Activated CD4-positive, alpha-beta memory T cell treated with anti-CD3 and anti-CD28 coated beads for 36 hours (primary cell): ENCODE measurements at regions of chr3 and their contacts with region 1.

Region 1: GRCh38 chr3:197613199-197613598 is 57.4 kb upstream of the BDH1 start:
- DNase-seq: peak; percentile 73
- H3K4me3 Mint-ChIP-seq: peak overlapping the region; percentile 5
- H3K27ac Mint-ChIP-seq: peak overlapping the region; percentile 80
- H3K4me1 Mint-ChIP-seq: peaks cover 21% of the 10 kb centered on the region
- H3K27me3 Mint-ChIP-seq: no peaks in the 10 kb centered on the region

Region 2: DNA sequence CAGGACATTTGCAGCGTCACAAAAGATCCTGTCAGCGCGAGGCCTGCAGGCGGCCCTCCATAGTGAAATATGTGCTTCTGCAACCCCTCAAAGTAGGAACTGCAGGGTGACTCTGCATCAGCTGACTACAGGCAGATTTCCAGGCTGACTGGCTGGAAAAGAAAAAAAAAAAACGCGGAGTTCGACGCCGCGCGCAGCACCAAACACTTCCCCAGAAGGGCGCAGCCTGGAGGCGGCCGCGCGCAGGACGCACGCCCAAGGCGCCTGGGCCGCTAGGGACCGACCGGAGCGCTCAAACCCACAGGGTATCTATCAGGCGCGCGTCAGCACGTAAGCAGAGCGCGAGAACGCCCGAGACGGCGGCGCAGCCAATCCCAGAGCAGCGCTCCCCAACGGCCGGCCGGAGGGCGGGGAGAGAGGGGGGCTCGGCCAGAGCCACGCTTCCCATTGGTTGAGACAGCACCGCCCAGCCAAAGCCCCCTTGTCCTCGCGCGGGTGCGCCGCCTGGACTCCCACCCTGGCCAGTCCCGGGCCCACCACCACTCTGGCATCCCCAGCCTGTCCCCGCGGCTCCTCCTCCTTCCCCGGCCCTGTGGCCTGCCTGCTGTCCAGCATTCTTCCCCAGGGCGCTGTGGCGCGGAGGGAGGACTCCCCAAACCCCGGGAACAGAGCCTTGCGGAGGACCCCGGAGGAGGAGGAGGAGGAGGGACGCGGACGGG is 58.5 kb before region 1 on chr3:
- CTCF ChIA-PET with region 1: no interaction called
- POLR2A ChIA-PET with region 1: no interaction called
- intact Hi-C with region 1: loop called (anchors 5 kb)
- DNase-seq: peak; percentile 97
- H3K4me3 Mint-ChIP-seq: peak overlapping the region; percentile 89
- H3K27ac Mint-ChIP-seq: peak overlapping the region; percentile 92
- H3K4me1 Mint-ChIP-seq: peaks cover 12% of the 10 kb centered on the region
- H3K27me3 Mint-ChIP-seq: no peaks in the 10 kb centered on the region

Region 3: DNA sequence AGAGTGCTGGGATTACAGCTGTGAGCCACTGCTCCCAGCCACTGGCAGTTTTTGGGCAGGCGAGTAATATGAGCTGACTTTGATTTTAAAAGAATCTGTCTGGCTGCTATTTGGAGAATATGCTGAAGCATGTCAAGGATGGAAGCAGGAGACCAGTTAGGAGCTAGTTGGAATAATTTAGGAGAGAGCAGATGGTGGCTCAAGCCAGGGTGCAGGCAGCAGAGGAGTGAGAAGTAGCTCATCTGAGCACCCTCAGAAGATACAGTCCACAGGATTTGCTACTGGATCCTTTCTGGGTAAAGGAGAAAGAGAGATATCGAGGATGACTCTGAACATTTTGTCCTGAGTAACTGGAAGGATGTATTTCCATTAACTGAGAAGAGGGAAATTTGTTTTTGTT is 27.0 kb before region 1 on chr3:
- CTCF ChIA-PET with region 1: no interaction called
- POLR2A ChIA-PET with region 1: no interaction called
- intact Hi-C with region 1: no loop called
- DNase-seq: no peak
- H3K4me3 Mint-ChIP-seq: no peak overlapping the region
- H3K27ac Mint-ChIP-seq: no peak overlapping the region
- H3K4me1 Mint-ChIP-seq: peaks cover 5% of the 10 kb centered on the region
- H3K27me3 Mint-ChIP-seq: no peaks in the 10 kb centered on the region

Region 4: GRCh38 chr3:197711973-197712707 is 98.9 kb after region 1 on chr3:
- CTCF ChIA-PET with region 1: no interaction called
- POLR2A ChIA-PET with region 1: no interaction called
- intact Hi-C with region 1: no loop called
- DNase-seq: peak; percentile 94
- H3K4me3 Mint-ChIP-seq: peak overlapping the region; percentile 62
- H3K27ac Mint-ChIP-seq: peak overlapping the region; percentile 86
- H3K4me1 Mint-ChIP-seq: peaks cover 35% of the 10 kb centered on the region
- H3K27me3 Mint-ChIP-seq: no peaks in the 10 kb centered on the region